ENCODE measurements at regions of chr11 and their contacts with region 1.

Region 1: GRCh38 chr11:6531267-6531752 is 34.2 kb downstream of the DNHD1 start:
- DNase-seq: no peak
- H3K4me3 ChIP-seq: no peak overlapping the region
- H3K27ac ChIP-seq: no peak overlapping the region
- H3K4me1 ChIP-seq: no peaks in the 10 kb centered on the region
- H3K27me3 ChIP-seq: no peaks in the 10 kb centered on the region
- CTCF ChIP-seq: peak; percentile 78 to 80

Region 2: DNA sequence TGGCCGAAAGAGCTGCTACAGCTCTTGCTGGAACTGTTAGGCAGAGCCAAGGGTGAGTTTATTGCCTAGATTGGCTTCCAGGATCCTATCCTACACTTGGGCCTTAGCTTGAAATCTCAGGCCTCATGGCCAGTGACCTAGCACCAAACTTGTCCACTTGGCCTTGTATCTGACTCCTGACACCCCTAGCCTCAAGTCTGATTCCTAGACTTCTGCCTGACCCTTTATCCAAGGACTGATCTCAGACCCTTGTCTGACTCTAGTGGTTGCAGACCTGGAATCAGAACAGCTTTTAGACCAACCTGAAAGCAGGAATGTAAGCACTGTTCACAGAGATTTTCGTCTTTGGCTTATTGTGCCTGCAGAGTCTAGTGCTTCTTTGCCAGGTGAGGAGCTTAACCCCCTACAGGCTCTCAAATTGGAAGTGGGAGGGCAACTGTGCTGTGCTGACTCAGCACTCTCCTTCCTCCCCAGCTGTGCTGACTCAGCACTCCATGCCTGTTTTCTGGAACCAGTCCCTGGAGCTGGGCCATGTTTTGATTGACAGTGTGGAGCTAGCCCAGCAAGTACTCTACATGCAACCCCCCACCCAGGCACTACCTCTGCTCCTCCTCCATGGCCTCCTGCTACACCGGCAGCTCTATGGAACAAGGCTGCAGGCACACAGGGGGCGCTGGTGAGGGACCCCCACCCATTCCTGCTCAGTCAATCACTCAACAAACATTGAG is 37.0 kb after region 1 on chr11:
- intact Hi-C with region 1: no loop called
- DNase-seq: no peak
- H3K4me3 ChIP-seq: no peak overlapping the region
- H3K27ac ChIP-seq: no peak overlapping the region
- H3K4me1 ChIP-seq: peaks cover 0 to 22% (median 14%) of the 10 kb centered on the region in 4 donors
- H3K27me3 ChIP-seq: no peaks in the 10 kb centered on the region
- CTCF ChIP-seq: no peak

Region 3: GRCh38 chr11:6586434-6587359 is 55.4 kb after region 1 on chr11:
- intact Hi-C with region 1: loop called (anchors 10 kb)
- DNase-seq: no peak
- H3K4me3 ChIP-seq: no peak overlapping the region
- H3K27ac ChIP-seq: peak overlapping the region in 1 of 2 donors; percentile 56
- H3K4me1 ChIP-seq: peaks cover 0 to 19% (median 9%) of the 10 kb centered on the region in 4 donors
- H3K27me3 ChIP-seq: no peaks in the 10 kb centered on the region
- CTCF ChIP-seq: no peak

Region 4: DNA sequence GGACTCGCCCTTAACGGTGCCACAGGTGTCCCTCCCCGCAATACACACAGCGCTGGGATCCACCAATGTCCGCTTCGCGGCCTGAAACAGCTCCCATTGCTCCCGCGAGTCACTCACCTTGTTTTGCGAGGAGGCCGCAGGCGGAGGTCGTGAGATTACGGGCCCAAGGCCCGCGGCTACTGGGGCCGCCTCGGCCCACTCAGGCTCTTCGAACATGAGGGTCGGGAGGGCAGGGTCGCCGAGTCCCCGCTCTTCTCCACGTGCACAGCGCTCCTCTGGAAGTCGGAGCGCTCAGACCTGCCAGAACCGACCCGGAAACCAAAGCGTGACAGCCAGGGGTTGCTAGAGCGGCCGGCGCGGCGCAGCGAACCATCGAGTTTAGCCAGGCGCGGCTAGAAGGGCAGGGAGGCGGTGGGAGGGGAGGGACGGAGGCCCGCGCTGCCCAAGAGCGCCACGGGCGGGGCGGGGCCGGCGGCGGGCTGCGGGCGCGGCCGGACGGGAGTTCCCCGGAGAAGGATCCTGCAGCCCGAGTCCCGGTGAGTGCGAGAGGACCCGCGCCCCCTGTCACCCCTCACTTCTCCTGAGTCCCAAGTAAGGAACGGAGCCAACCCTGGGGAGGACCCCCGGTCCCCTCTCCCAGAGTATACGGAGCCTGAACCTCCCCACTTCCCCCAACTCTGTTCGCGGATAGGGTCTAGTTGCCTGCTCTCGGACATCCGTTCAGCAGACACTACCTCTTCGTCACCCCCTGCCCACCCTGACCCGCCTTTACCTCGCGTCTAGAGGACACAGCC is 72.2 kb after region 1 on chr11 and contains the starts of genes ILK and RRP8:
- intact Hi-C with region 1: no loop called
- DNase-seq: peak; percentile 90 to 96
- H3K4me3 ChIP-seq: peak within 1 kb of the TSS; percentile 83 to 96
- H3K27ac ChIP-seq: peak within 1 kb of the TSS; percentile 93 to 98
- H3K4me1 ChIP-seq: peaks cover 4 to 71% (median 58%) of the 10 kb centered on the region in 4 donors
- H3K27me3 ChIP-seq: no peaks in the 10 kb centered on the region
- CTCF ChIP-seq: peak in 1 of 2 experiments; percentile 26

Region 5: GRCh38 chr11:6682936-6683861 is 151.9 kb after region 1 on chr11 and contains the start of gene MRPL17:
- intact Hi-C with region 1: loop called (anchors 5 kb)
- DNase-seq: peak; percentile 98 to 100
- H3K4me3 ChIP-seq: peak within 1 kb of the TSS; percentile 76 to 93
- H3K27ac ChIP-seq: peak within 1 kb of the TSS; percentile 89 to 94
- H3K4me1 ChIP-seq: peaks cover 0 to 24% (median 20%) of the 10 kb centered on the region in 4 donors
- H3K27me3 ChIP-seq: no peaks in the 10 kb centered on the region
- CTCF ChIP-seq: peak; percentile 88 to 93

Region 6: GRCh38 chr11:6705905-6706535 is 174.7 kb after region 1 on chr11:
- intact Hi-C with region 1: loop called (anchors 5 kb)
- DNase-seq: peak in 1 of 2 donors; percentile 61
- H3K4me3 ChIP-seq: no peak overlapping the region
- H3K27ac ChIP-seq: no peak overlapping the region
- H3K4me1 ChIP-seq: peaks cover 0 to 4% (median 0%) of the 10 kb centered on the region in 4 donors
- H3K27me3 ChIP-seq: no peaks in the 10 kb centered on the region
- CTCF ChIP-seq: peak; percentile 82 to 89

Region 7: GRCh38 chr11:6719576-6719975 is 188.3 kb after region 1 on chr11:
- intact Hi-C with region 1: no loop called
- DNase-seq: no peak
- H3K4me3 ChIP-seq: no peak overlapping the region
- H3K27ac ChIP-seq: no peak overlapping the region
- H3K4me1 ChIP-seq: no peaks in the 10 kb centered on the region
- H3K27me3 ChIP-seq: peaks cover 0 to 3% of the 10 kb centered on the region in 2 donors
- CTCF ChIP-seq: no peak

Measured in tibial artery (tissue), 4 donors.